ENCODE measurements at regions of chr15 and their contacts with region 1.

Region 1: DNA sequence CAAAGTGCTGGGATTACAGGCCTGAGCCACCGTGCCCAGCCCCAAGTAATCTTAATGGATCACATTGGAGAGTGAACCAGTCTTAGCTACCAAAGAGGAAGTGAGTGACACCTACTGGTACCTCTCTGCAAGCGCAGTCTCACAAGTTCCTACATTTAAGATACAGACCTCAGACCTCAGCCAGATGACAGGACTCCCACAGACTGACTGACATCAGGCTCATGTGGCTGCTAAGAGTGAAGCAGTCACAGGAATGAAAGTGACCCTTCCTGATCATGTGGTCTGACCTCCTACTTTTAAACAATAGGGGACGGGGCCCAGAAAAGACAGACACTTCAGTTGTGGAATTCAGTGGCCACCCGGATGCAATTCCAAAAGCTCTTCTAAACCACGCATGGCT is 36.3 kb upstream of the GNB5 start:
- DNase-seq: peak; percentile 73
- H3K4me3 Mint-ChIP-seq: no peak overlapping the region
- H3K27ac Mint-ChIP-seq: no peak overlapping the region
- H3K4me1 Mint-ChIP-seq: no peaks in the 10 kb centered on the region
- H3K27me3 Mint-ChIP-seq: no peaks in the 10 kb centered on the region
- CTCF ChIP-seq: peak; percentile 77

Region 2: GRCh38 chr15:52208306-52208946 is 19.0 kb before region 1 on chr15:
- CTCF ChIA-PET with region 1: interaction called, 22 read pairs
- POLR2A ChIA-PET with region 1: no interaction called
- intact Hi-C with region 1: no loop called
- DNase-seq: peak; percentile 73
- H3K4me3 Mint-ChIP-seq: no peak overlapping the region
- H3K27ac Mint-ChIP-seq: no peak overlapping the region
- H3K4me1 Mint-ChIP-seq: no peaks in the 10 kb centered on the region
- H3K27me3 Mint-ChIP-seq: no peaks in the 10 kb centered on the region
- CTCF ChIP-seq: peak; percentile 83

Region 3: GRCh38 chr15:52217186-52217585 is 10.3 kb before region 1 on chr15:
- CTCF ChIA-PET with region 1: interaction called, 18 read pairs
- POLR2A ChIA-PET with region 1: interaction called, 4 read pairs
- intact Hi-C with region 1: no loop called
- DNase-seq: peak; percentile 21
- H3K4me3 Mint-ChIP-seq: no peak overlapping the region
- H3K27ac Mint-ChIP-seq: no peak overlapping the region
- H3K4me1 Mint-ChIP-seq: no peaks in the 10 kb centered on the region
- H3K27me3 Mint-ChIP-seq: no peaks in the 10 kb centered on the region
- CTCF ChIP-seq: no peak

Region 4: GRCh38 chr15:52246686-52247431 is 19.4 kb after region 1 on chr15:
- CTCF ChIA-PET with region 1: interaction called, 17 read pairs
- POLR2A ChIA-PET with region 1: interaction called, 13 read pairs
- intact Hi-C with region 1: no loop called
- DNase-seq: peak; percentile 95
- H3K4me3 Mint-ChIP-seq: peak overlapping the region; percentile 43
- H3K27ac Mint-ChIP-seq: peak overlapping the region; percentile 99
- H3K4me1 Mint-ChIP-seq: peaks cover 34% of the 10 kb centered on the region
- H3K27me3 Mint-ChIP-seq: no peaks in the 10 kb centered on the region
- CTCF ChIP-seq: no peak

Region 5: GRCh38 chr15:52338058-52338457 is 110.6 kb after region 1 on chr15:
- CTCF ChIA-PET with region 1: no interaction called
- POLR2A ChIA-PET with region 1: no interaction called
- intact Hi-C with region 1: no loop called
- DNase-seq: no peak
- H3K4me3 Mint-ChIP-seq: no peak overlapping the region
- H3K27ac Mint-ChIP-seq: no peak overlapping the region
- H3K4me1 Mint-ChIP-seq: peaks cover 19% of the 10 kb centered on the region
- H3K27me3 Mint-ChIP-seq: no peaks in the 10 kb centered on the region
- CTCF ChIP-seq: no peak

Measured in MCF 10A (cell line).